ENCODE measurements at regions of chr6 and their contacts with region 1.

Region 1: DNA sequence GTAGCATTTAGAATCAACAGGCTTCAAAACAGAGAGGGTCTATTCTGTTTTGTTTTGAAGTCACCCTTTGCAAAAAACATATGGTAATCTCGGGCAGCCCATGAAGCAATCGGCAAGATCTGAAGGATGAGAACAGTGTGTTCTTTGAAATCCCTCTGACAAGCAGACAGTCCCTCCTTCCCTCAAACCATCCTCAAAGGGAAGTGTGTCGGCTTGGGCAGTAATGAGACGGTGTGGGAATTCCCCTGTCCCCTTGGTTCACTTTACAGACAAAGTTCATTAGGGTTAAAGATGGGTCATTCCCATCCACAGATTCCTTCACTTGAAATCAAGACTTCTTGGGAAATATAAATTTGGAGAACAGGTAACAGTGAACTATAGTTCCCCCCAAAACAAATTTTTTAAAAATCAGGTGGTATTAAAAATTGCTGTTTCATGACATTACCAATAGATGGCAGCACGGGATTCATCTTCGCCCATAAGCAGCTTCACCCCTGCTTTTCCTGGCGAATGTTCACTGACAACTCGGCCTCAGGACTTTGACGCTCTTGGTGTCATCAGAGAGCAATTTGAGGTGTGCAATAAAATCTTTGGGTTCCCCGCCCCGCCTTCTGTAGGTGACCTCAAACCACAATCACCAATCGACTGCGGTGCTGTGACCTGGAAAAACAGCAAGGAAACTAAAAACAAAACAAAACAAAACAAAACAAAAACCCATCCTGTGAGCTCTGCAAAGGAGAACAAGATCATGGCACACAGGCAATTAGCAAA is 159.3 kb upstream of the TNFAIP3 start:
- DNase-seq: peak; percentile 90 to 96 (median 92)
- H3K4me3 ChIP-seq: peak overlapping the region in 1 of 3 experiments; percentile 32
- H3K4me3 Mint-ChIP-seq: peak overlapping the region; percentile 65 to 88
- H3K27ac ChIP-seq: peak overlapping the region in 1 of 2 donors; percentile 62
- H3K27ac Mint-ChIP-seq: peak overlapping the region; percentile 82 to 95 (median 91)
- H3K4me1 ChIP-seq: peaks cover 25 to 28% of the 10 kb centered on the region in 2 donors
- H3K4me1 Mint-ChIP-seq: peaks cover 41% of the 10 kb centered on the region
- H3K27me3 ChIP-seq: no peaks in the 10 kb centered on the region
- H3K27me3 Mint-ChIP-seq: peaks cover 0 to 3% (median 2%) of the 10 kb centered on the region in 3 donors
- CTCF ChIP-seq: peak; percentile 93

Region 2: DNA sequence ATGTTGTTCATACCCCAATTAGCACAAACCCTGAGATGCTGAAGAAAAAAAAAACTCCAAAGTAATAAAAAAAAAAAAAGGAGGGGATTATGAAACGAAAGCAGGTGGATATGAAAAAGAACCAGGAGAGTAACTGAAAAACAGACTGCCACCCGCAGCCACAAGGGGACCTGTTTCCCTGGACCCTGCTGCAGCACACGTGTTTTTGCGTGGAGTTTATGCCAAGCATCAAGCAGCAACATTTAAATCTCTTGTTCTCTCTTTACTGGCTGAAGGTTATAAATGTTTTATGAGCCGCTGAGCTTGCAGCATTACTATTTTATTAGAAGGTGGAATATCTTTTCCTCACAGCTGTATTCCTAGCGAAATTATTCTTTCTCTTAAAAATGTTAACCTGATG is 82.0 kb before region 1 on chr6:
- intact Hi-C with region 1: no loop called
- DNase-seq: no peak
- H3K4me3 ChIP-seq: no peak overlapping the region
- H3K4me3 Mint-ChIP-seq: no peak overlapping the region
- H3K27ac ChIP-seq: no peak overlapping the region
- H3K27ac Mint-ChIP-seq: no peak overlapping the region
- H3K4me1 ChIP-seq: no peaks in the 10 kb centered on the region
- H3K4me1 Mint-ChIP-seq: peaks cover 7% of the 10 kb centered on the region
- H3K27me3 ChIP-seq: peaks cover 0 to 6% of the 10 kb centered on the region in 2 donors
- H3K27me3 Mint-ChIP-seq: peaks cover 2 to 14% (median 13%) of the 10 kb centered on the region in 3 donors
- CTCF ChIP-seq: no peak

Region 3: GRCh38 chr6:137754366-137754765 is 46.6 kb after region 1 on chr6:
- intact Hi-C with region 1: no loop called
- DNase-seq: peak in 2 of 3 donors; percentile 51 to 69
- H3K4me3 ChIP-seq: peak overlapping the region in 1 of 3 experiments; percentile 42
- H3K4me3 Mint-ChIP-seq: peak overlapping the region; percentile 54 to 82
- H3K27ac ChIP-seq: peak overlapping the region in 1 of 2 donors; percentile 68
- H3K27ac Mint-ChIP-seq: peak overlapping the region; percentile 78 to 90 (median 87)
- H3K4me1 ChIP-seq: peaks cover 28 to 31% of the 10 kb centered on the region in 2 donors
- H3K4me1 Mint-ChIP-seq: peaks cover 32% of the 10 kb centered on the region
- H3K27me3 ChIP-seq: no peaks in the 10 kb centered on the region
- H3K27me3 Mint-ChIP-seq: peaks cover 2 to 3% (median 2%) of the 10 kb centered on the region in 3 donors
- CTCF ChIP-seq: no peak

Region 4: DNA sequence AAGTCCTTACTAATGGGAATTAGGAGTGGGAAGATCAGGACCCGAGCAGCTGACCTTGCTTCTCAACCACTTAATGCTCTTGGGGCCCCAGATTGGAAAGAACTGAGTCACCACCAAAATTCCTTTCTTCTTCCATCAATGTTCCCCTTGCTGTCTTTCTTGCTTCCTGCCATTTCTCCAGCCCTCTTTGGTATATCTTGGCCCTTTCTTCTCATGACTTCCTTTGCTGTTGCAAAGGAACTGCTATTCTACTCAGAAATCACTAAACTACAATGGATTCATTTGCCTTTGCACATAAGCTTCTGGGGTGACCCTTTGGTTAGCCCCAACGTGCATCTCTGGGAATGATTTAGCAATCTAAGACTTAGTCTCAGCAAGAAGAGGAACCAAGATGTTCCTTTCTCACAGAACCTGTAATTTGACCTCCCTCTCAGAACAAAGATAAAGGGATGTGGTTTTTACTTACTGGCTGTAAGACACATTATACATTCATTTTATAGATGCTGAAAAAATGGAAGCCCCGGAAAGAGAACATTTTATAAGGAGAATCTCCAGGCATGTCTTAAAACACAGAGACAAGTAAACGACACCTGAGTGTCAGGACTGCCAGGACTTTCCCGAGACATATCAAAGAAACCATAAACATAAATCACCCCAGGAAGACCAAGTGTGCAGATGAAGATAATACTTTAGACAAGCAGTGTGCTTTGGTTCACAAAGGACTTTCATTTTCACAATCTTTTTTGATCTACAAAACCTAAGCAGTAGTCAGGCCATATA is 60.3 kb after region 1 on chr6:
- intact Hi-C with region 1: loop called (anchors 5 to 10 kb)
- DNase-seq: peak; percentile 76 to 85 (median 81)
- H3K4me3 ChIP-seq: peak overlapping the region in 1 of 3 experiments; percentile 36
- H3K4me3 Mint-ChIP-seq: peak overlapping the region in 1 of 2 donors; percentile 85
- H3K27ac ChIP-seq: peak overlapping the region in 1 of 2 donors; percentile 72
- H3K27ac Mint-ChIP-seq: peak overlapping the region; percentile 88 to 96 (median 94)
- H3K4me1 ChIP-seq: peaks cover 28 to 32% of the 10 kb centered on the region in 2 donors
- H3K4me1 Mint-ChIP-seq: peaks cover 33% of the 10 kb centered on the region
- H3K27me3 ChIP-seq: no peaks in the 10 kb centered on the region
- H3K27me3 Mint-ChIP-seq: peaks cover 0 to 3% (median 0%) of the 10 kb centered on the region in 3 donors
- CTCF ChIP-seq: no peak

Region 5: GRCh38 chr6:137846772-137847313 is 139.1 kb after region 1 on chr6:
- intact Hi-C with region 1: loop called in 1 of 2 experiments (anchors 5 kb)
- DNase-seq: peak; percentile 95 to 98 (median 97)
- H3K4me3 ChIP-seq: peak overlapping the region in 1 of 3 experiments; percentile 49
- H3K4me3 Mint-ChIP-seq: no peak overlapping the region
- H3K27ac ChIP-seq: peak overlapping the region; percentile 78 to 95
- H3K27ac Mint-ChIP-seq: no peak overlapping the region
- H3K4me1 ChIP-seq: peaks cover 47 to 63% of the 10 kb centered on the region in 2 donors
- H3K4me1 Mint-ChIP-seq: peaks cover 22% of the 10 kb centered on the region
- H3K27me3 ChIP-seq: no peaks in the 10 kb centered on the region
- H3K27me3 Mint-ChIP-seq: no peaks in the 10 kb centered on the region
- CTCF ChIP-seq: no peak

Region 6: GRCh38 chr6:137944793-137945498 is 237.2 kb after region 1 on chr6:
- intact Hi-C with region 1: loop called in 1 of 2 experiments (anchors 5 kb)
- DNase-seq: peak; percentile 32 to 63 (median 56)
- H3K4me3 ChIP-seq: no peak overlapping the region
- H3K4me3 Mint-ChIP-seq: peak overlapping the region in 1 of 2 donors; percentile 29
- H3K27ac ChIP-seq: no peak overlapping the region
- H3K27ac Mint-ChIP-seq: peak overlapping the region in 4 of 7 donors; percentile 7 to 73 (median 54)
- H3K4me1 ChIP-seq: peaks cover 8 to 20% of the 10 kb centered on the region in 2 donors
- H3K4me1 Mint-ChIP-seq: peaks cover 26% of the 10 kb centered on the region
- H3K27me3 ChIP-seq: no peaks in the 10 kb centered on the region
- H3K27me3 Mint-ChIP-seq: peaks cover 0 to 6% (median 0%) of the 10 kb centered on the region in 3 donors
- CTCF ChIP-seq: peak; percentile 83

Region 7: DNA sequence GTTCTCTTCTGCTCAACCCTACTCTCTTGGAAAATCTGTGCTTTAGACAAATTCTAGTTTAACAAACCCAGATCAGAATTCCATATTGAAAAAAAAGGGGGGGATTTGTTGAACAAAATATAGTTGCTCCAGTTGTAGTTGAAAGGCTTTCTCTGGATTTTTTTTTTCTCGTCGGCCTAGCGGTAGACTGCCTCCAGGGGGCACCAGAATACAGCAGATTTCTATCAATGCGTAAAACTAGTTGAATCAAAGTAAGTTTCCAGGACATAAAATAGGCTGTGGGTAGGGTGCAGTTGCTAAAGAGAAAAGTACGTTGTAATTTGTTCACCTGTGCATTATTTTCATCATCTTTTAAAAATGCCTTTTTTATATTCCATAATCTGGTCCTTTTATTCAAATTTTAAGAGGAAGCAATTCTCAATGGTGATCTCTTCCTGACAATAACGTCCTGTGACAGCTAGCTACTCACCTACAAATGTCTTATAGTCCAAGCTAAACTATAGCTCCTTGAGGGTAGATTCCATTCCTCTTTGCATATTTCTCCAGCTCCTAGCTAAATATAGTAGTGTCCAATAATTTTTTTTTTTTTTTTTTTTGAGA is 294.1 kb after region 1 on chr6:
- intact Hi-C with region 1: loop called in 1 of 2 experiments (anchors 10 kb)
- DNase-seq: peak; percentile 25 to 52 (median 45)
- H3K4me3 ChIP-seq: no peak overlapping the region
- H3K4me3 Mint-ChIP-seq: no peak overlapping the region
- H3K27ac ChIP-seq: no peak overlapping the region
- H3K27ac Mint-ChIP-seq: no peak overlapping the region
- H3K4me1 ChIP-seq: peaks cover 0 to 9% of the 10 kb centered on the region in 2 donors
- H3K4me1 Mint-ChIP-seq: peaks cover 7% of the 10 kb centered on the region
- H3K27me3 ChIP-seq: no peaks in the 10 kb centered on the region
- H3K27me3 Mint-ChIP-seq: peaks cover 0 to 20% (median 9%) of the 10 kb centered on the region in 3 donors
- CTCF ChIP-seq: peak; percentile 88